A673 (cell line): ENCODE measurements at regions of chr14 and their contacts with region 1.

Region 1: DNA sequence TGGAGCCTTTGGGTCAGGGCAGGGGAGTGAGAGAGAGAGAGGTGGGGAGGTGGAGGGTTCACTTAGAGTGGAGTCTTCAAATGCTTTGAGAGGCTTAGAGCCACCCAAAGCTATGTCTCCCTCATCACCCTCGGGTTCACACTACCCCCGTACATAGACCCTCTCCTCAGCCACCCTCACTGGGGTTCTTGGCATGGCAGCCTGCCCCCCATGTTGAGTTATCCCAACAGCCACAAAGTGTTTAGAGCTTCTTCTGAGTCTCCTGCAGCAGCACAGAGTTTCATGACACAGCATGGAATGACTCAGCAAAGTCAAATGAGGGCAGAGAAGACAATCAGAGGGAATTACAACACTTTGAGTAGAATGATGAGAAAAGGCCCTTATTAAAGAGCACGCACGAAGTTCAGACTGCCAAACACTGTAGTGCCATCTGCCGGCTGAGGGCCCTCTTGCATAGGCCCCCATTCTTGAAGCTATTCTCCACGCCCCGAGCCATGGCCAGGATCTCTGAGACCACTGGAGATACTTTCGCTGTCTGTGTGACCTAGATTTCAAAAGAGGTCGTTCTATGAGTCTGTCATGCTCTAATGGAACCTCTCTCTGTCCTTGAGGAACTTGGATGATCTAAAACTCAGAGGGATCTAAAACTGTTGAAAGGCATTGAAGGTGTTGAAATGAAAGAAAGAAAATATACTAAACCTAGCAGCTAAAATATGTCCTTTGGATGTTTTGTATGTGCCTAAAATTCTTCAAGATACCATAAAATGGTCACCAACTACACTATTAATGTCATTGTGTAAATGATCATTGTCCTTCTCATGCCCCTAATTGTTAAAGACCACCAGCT is 221.9 kb downstream of the PELI2 start:
- DNase-seq: peak; percentile 93
- H3K4me3 ChIP-seq: no peak overlapping the region
- H3K27ac ChIP-seq: no peak overlapping the region
- H3K4me1 ChIP-seq: peaks cover 21% of the 10 kb centered on the region
- H3K27me3 ChIP-seq: no peaks in the 10 kb centered on the region
- CTCF ChIP-seq: peak; percentile 95

Region 2: DNA sequence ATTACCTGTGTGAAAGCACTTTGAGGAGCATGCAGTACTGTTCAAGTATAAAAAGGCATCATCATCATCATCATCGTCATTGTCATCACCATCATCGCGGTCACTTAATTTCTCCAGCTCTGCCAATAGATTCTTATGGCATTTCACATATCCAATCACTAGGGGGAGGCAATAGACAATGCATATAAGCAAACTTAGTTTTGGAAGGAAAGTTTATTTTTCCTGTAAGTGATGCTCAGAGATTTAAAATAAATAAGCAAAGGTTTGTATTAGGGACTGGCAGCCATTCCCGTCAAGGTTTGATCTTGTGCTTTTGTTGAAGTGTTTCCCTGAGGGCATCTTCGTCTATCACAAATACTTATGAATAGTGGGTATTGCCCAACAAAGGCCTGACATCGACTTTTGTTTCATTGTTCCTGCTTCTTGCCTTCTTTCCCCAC is 632.7 kb before region 1 on chr14:
- CTCF ChIA-PET with region 1: interaction called, 4 read pairs
- POLR2A ChIA-PET with region 1: no interaction called
- intact Hi-C with region 1: loop called (anchors 5 kb)
- DNase-seq: peak; percentile 71
- H3K4me3 ChIP-seq: no peak overlapping the region
- H3K27ac ChIP-seq: no peak overlapping the region
- H3K4me1 ChIP-seq: peaks cover 6% of the 10 kb centered on the region
- H3K27me3 ChIP-seq: no peaks in the 10 kb centered on the region
- CTCF ChIP-seq: peak; percentile 74

Region 3: DNA sequence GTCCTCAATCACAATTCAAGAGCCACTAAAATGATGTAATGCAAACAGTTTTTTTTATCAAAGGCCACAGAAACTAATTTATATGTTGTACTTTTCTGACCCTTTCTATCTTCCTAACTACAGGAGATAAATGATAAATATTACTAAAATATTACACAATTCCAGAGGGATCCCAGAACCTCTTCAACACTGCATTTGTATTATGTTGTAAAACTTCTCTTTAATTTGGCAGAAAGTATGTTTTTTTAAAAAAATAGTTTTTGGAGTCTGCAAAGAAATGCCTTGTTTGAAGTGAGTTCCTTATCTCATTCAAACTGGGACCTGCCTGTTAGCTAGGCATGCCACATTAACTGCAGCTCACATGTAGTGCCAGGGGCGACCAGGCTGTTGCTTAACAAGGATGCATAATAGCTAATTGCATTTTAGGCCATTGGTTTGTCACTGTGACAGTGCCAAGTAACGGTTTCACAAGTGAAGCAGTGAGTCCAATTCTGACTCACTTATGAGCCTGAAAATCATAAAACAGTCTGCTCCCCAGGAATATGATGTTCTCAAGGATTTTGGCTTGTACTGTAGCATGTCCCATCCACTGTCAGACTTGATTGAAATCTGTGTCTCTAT is 493.1 kb before region 1 on chr14:
- CTCF ChIA-PET with region 1: no interaction called
- POLR2A ChIA-PET with region 1: no interaction called
- intact Hi-C with region 1: loop called (anchors 10 kb)
- DNase-seq: peak; percentile 34
- H3K4me3 ChIP-seq: no peak overlapping the region
- H3K27ac ChIP-seq: no peak overlapping the region
- H3K4me1 ChIP-seq: peaks cover 19% of the 10 kb centered on the region
- H3K27me3 ChIP-seq: no peaks in the 10 kb centered on the region
- CTCF ChIP-seq: no peak

Region 4: GRCh38 chr14:56422703-56423213 is 82.7 kb after region 1 on chr14:
- CTCF ChIA-PET with region 1: interaction called, 5 read pairs
- POLR2A ChIA-PET with region 1: no interaction called
- intact Hi-C with region 1: loop called (anchors 5 kb)
- DNase-seq: peak; percentile 81
- H3K4me3 ChIP-seq: no peak overlapping the region
- H3K27ac ChIP-seq: peak overlapping the region; percentile 73
- H3K4me1 ChIP-seq: peaks cover 25% of the 10 kb centered on the region
- H3K27me3 ChIP-seq: no peaks in the 10 kb centered on the region
- CTCF ChIP-seq: peak; percentile 88